HEK293 (cell line): ENCODE measurements at regions of chr22 and their contacts with region 1.

Region 1: DNA sequence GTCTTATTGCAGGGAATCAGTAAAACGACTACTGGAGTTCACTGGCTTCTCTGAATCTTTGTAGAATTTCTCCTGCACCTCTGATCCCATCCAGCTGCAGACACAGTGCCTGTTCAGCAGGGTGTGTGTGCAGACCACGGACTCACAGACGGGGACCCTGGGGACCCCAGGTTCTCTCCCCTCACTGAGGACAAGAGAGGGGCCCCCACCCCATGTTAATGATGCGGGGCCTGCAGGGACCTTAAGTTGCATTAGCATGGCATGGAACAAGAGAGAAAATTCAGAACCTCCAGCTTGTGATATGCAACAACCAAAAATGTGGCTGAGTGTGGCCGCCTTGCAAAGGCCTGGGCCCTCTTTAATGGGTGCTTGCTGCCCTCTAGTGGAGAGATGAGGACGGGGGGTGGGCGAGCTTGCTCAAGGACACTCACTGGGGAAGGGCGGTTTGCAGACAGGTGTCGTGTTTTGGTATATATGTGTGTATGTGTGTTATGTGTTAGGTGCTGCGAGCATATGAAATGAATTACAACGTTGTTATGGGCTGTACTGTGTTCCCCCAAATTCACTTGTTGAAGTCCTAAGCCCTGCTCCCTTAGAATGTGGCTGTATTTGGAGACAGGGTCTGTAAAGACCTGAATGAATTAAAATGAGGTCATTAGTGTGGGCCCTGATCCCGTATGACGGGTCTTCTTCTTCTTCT is 84.4 kb upstream of the SEPTIN5 start:
- H3K4me3 ChIP-seq: no peak overlapping the region
- H3K27ac ChIP-seq: no peak overlapping the region
- H3K4me1 ChIP-seq: no peaks in the 10 kb centered on the region
- CTCF ChIP-seq: peak; percentile 94

Region 2: DNA sequence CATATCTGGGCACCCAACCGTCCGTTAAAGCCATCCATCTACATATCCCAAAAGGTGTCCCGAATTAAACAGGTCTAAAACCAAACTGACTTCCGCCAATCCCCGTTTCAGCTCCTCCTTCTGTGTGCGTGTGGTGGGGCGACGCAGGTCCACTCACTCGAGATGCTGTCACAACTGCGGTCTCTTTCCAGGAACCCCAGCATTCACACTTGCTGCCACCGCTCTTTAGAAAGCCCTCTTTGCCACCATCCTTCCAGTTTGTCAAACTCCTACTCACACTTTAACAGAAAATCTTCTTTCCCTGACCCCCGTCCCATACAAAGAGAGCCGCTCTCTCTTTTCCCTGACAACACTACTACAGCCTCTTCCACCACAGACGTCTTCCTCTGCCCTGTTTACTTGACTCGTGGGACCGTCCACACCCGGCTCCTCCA is 485.9 kb before region 1 on chr22:
- CTCF ChIA-PET with region 1: interaction called, 25 read pairs
- POLR2A ChIA-PET with region 1: interaction called, 5 read pairs
- H3K4me3 ChIP-seq: peak overlapping the region; percentile 86
- H3K27ac ChIP-seq: peak overlapping the region; percentile 43; the same call in 1 of the 2 replicates
- H3K4me1 ChIP-seq: no peaks in the 10 kb centered on the region
- CTCF ChIP-seq: no peak

Region 3: GRCh38 chr22:19473578-19473977 is 156.3 kb before region 1 on chr22:
- CTCF ChIA-PET with region 1: interaction called, 31 read pairs
- POLR2A ChIA-PET with region 1: no interaction called
- H3K4me3 ChIP-seq: no peak overlapping the region
- H3K27ac ChIP-seq: no peak overlapping the region
- H3K4me1 ChIP-seq: no peaks in the 10 kb centered on the region
- CTCF ChIP-seq: peak; percentile 22; the same call in 1 of the 2 replicates

Region 4: DNA sequence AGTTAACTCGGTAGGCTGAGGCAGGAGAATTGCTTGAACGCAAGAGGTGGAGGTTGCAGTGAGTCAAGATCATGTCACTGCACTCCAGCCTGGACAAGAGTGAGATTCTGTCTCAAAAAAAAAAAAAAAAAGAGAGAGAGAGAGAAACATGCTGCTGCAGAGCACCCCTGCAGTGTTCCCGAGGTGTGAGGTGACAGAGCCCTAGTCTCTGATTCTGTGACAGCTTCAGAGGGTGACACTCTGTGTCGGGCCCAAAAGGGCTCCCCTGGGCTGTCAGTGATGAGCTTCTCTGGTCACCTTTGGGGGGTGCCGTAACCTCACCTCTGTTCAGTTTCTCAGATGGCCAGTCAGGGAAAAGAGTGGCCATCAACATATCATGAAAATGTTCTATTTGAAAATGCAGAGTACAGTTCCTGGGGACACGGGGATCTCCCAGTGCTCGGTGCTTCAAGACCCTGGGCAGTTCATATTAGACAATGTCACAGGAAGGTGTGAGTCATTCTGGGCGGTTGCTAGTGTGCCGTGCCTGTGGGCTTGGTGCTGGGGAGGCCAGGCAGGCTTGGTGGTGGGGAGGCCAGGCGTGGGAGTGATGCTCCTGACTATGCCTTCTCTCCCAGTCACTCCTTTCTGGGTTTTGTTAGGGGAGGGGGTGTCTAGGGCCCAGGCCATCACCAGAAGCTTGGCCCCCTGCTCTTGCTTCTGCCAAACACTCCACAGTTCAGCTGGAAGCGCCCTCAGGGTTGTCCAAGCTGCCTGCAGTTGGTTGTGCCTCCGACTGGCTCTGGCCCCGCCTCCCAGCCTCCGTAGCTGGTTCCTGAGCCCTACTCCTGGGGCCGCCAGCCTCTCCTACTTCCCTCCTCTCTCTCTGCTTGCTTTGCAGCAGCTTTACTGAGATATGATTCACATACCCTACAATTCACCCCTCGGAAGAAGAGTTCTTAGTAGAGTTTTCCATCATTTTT is 53.1 kb before region 1 on chr22:
- CTCF ChIA-PET with region 1: interaction called, 13 read pairs
- POLR2A ChIA-PET with region 1: no interaction called
- H3K4me3 ChIP-seq: no peak overlapping the region
- H3K27ac ChIP-seq: no peak overlapping the region
- H3K4me1 ChIP-seq: no peaks in the 10 kb centered on the region
- CTCF ChIP-seq: no peak

Region 5: GRCh38 chr22:19619144-19620009 is 10.5 kb before region 1 on chr22:
- CTCF ChIA-PET with region 1: interaction called, 12 read pairs
- POLR2A ChIA-PET with region 1: no interaction called
- H3K4me3 ChIP-seq: no peak overlapping the region
- H3K27ac ChIP-seq: no peak overlapping the region
- H3K4me1 ChIP-seq: no peaks in the 10 kb centered on the region
- CTCF ChIP-seq: no peak